ENCODE measurements at regions of chr3 and their contacts with region 1.

Region 1: GRCh38 chr3:111539351-111540331 is 2.4 kb upstream of the CD96 start:
- DNase-seq: peak; percentile 81
- ATAC-seq: peak; percentile 21
- H3K4me3 Mint-ChIP-seq: peak overlapping the region; percentile 62
- H3K27ac Mint-ChIP-seq: peak overlapping the region; percentile 80
- H3K4me1 Mint-ChIP-seq: peaks cover 72% of the 10 kb centered on the region
- H3K27me3 Mint-ChIP-seq: no peaks in the 10 kb centered on the region

Region 2: GRCh38 chr3:109806929-109807328 is 1732.7 kb before region 1 on chr3:
- CTCF ChIA-PET with region 1: no interaction called
- POLR2A ChIA-PET with region 1: no interaction called
- intact Hi-C with region 1: loop called in 1 of 2 experiments (anchors 5 kb)
- DNase-seq: peak; percentile 37
- ATAC-seq: peak; percentile 88
- H3K4me3 Mint-ChIP-seq: peak overlapping the region; percentile 23
- H3K27ac Mint-ChIP-seq: peak overlapping the region; percentile 69
- H3K4me1 Mint-ChIP-seq: peaks cover 37% of the 10 kb centered on the region
- H3K27me3 Mint-ChIP-seq: peaks cover 2% of the 10 kb centered on the region

Region 3: DNA sequence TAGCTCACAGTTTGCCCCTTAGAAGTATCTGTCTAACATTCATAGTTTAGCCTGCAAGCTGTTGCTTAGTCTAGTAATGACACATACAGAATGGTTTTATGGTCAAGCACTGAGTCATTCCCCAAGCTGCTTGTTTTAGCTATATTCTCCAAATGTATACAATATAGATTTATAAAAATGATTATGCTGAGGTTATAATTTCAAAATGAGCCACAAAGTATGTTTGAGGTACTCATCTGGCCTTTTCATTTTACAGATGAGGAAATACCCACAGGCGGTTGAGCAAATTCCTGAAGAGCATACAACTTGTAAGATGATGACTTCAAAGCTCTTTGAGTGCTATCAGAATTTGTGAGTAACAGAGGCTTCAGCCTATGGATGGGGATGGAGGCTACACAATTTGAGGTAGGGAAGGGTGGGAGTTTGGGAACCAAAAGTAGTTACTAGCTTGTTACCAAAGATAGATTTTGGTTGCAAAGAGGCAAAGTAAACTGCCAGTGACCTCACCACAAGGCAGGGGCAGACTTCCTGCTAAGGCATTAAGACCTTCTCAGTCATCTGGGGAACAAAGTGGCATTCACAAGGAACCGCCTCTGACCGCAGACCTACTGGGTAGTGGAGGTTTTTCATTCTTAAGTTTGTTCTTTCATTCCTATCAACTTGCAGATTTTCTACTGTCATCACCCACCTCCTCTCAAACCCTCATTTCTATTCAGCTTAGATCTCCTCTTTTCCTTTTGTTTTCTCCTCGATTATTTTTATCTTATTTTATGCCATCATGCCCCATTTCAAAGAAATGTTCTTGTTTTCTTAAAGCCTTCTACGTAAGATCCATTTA is 725.3 kb before region 1 on chr3:
- CTCF ChIA-PET with region 1: no interaction called
- POLR2A ChIA-PET with region 1: no interaction called
- intact Hi-C with region 1: loop called (anchors 1 kb)
- DNase-seq: peak; percentile 70
- ATAC-seq: peak; percentile 79
- H3K4me3 Mint-ChIP-seq: no peak overlapping the region
- H3K27ac Mint-ChIP-seq: peak overlapping the region; percentile 67
- H3K4me1 Mint-ChIP-seq: peaks cover 10% of the 10 kb centered on the region
- H3K27me3 Mint-ChIP-seq: peaks cover 23% of the 10 kb centered on the region

Region 4: DNA sequence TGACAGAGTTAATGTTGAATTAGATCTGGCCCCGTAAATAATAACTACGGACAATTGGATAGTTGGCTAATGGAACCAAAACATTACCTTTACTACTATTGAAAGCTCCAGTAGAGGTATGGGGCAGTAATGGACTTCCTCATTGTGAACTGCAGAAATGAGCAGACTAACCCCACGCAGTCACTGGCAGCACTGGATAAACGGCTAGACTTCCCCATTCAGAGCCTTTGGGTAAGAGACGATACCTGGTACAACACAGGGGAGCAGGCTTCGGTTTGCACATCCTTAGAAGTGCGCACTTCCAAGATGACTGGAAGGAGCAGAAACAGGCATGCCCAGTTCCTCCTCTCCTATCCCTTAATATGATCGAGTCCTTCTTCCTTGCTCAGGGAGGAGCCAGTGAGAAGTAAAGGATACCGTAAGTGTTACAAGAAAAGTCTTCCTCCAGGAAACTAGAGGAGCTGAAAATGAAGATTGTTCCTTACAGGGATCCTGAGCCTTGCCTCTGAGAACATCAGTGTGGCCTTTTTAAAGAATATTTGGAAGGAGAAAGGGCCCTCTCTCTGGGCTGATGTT is 568.5 kb before region 1 on chr3:
- CTCF ChIA-PET with region 1: no interaction called
- POLR2A ChIA-PET with region 1: no interaction called
- intact Hi-C with region 1: no loop called
- DNase-seq: no peak
- ATAC-seq: no peak
- H3K4me3 Mint-ChIP-seq: no peak overlapping the region
- H3K27ac Mint-ChIP-seq: no peak overlapping the region
- H3K4me1 Mint-ChIP-seq: no peaks in the 10 kb centered on the region
- H3K27me3 Mint-ChIP-seq: peaks cover 11% of the 10 kb centered on the region

Region 5: GRCh38 chr3:111238885-111239284 is 300.8 kb before region 1 on chr3:
- CTCF ChIA-PET with region 1: interaction called, 3 read pairs
- POLR2A ChIA-PET with region 1: no interaction called
- intact Hi-C with region 1: loop called (anchors 2 kb)
- DNase-seq: no peak
- ATAC-seq: peak; percentile 94
- H3K4me3 Mint-ChIP-seq: no peak overlapping the region
- H3K27ac Mint-ChIP-seq: no peak overlapping the region
- H3K4me1 Mint-ChIP-seq: peaks cover 15% of the 10 kb centered on the region
- H3K27me3 Mint-ChIP-seq: no peaks in the 10 kb centered on the region

Region 6: DNA sequence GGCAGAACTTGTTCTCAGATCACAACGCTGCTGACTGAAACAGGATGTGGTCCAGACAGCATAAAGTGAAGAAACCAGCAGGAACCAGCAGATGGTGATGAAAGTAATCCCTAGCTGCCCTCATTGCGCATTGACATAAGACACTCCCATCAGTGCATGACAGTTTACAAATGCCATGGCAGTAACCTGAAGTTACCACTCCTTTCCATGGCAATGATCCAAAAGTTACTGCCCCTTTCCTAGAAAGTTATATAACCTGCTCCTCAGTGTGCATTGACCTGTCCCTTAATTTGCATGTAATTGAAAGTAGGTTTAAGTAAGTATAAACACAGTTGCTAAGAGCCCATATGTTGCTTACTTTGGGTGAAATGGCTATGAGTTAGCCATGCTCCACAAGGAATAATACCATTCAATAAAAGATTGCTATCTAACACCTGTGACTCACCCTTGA is 146.7 kb before region 1 on chr3:
- CTCF ChIA-PET with region 1: no interaction called
- POLR2A ChIA-PET with region 1: no interaction called
- intact Hi-C with region 1: loop called in 1 of 2 experiments (anchors 5 kb)
- DNase-seq: peak; percentile 41
- ATAC-seq: peak; percentile 93
- H3K4me3 Mint-ChIP-seq: no peak overlapping the region
- H3K27ac Mint-ChIP-seq: no peak overlapping the region
- H3K4me1 Mint-ChIP-seq: peaks cover 20% of the 10 kb centered on the region
- H3K27me3 Mint-ChIP-seq: no peaks in the 10 kb centered on the region

Region 7: GRCh38 chr3:111610189-111610588 is 70.5 kb after region 1 on chr3:
- CTCF ChIA-PET with region 1: interaction called, 6 read pairs
- POLR2A ChIA-PET with region 1: interaction called, 6 read pairs
- intact Hi-C with region 1: loop called in 1 of 2 experiments (anchors 1 kb)
- DNase-seq: peak; percentile 53
- ATAC-seq: peak; percentile 56
- H3K4me3 Mint-ChIP-seq: peak overlapping the region; percentile 62
- H3K27ac Mint-ChIP-seq: peak overlapping the region; percentile 98
- H3K4me1 Mint-ChIP-seq: peaks cover 98% of the 10 kb centered on the region
- H3K27me3 Mint-ChIP-seq: no peaks in the 10 kb centered on the region

Region 8: GRCh38 chr3:111967651-111968274 is 428.1 kb after region 1 on chr3:
- CTCF ChIA-PET with region 1: no interaction called
- POLR2A ChIA-PET with region 1: no interaction called
- intact Hi-C with region 1: loop called in 1 of 2 experiments (anchors 10 kb)
- DNase-seq: peak; percentile 90
- ATAC-seq: peak; percentile 85
- H3K4me3 Mint-ChIP-seq: no peak overlapping the region
- H3K27ac Mint-ChIP-seq: no peak overlapping the region
- H3K4me1 Mint-ChIP-seq: peaks cover 28% of the 10 kb centered on the region
- H3K27me3 Mint-ChIP-seq: no peaks in the 10 kb centered on the region

Measured in activated CD4-positive, alpha-beta T cell treated with anti-CD3 and anti-CD28 coated beads for 36 hours (primary cell).